ENCODE measurements at regions of chr3 and their contacts with region 1.

Region 1: GRCh38 chr3:179322286-179323196 is at the start of gene ZNF639:
- DNase-seq: peak; percentile 89
- ATAC-seq: peak; percentile 91
- total RNA-seq, gene ZNF639: 31.1 TPM

Region 2: GRCh38 chr3:178930116-178930515 is 392.4 kb before region 1 on chr3:
- intact Hi-C with region 1: no loop called
- DNase-seq: no peak
- ATAC-seq: no peak

Region 3: GRCh38 chr3:179015551-179016020 is 307.0 kb before region 1 on chr3:
- intact Hi-C with region 1: loop called (anchors 5 kb)
- DNase-seq: no peak
- ATAC-seq: peak; percentile 86

Region 4: GRCh38 chr3:179105881-179106280 is 216.7 kb before region 1 on chr3:
- intact Hi-C with region 1: loop called (anchors 2 kb)
- DNase-seq: no peak
- ATAC-seq: no peak

Region 5: DNA sequence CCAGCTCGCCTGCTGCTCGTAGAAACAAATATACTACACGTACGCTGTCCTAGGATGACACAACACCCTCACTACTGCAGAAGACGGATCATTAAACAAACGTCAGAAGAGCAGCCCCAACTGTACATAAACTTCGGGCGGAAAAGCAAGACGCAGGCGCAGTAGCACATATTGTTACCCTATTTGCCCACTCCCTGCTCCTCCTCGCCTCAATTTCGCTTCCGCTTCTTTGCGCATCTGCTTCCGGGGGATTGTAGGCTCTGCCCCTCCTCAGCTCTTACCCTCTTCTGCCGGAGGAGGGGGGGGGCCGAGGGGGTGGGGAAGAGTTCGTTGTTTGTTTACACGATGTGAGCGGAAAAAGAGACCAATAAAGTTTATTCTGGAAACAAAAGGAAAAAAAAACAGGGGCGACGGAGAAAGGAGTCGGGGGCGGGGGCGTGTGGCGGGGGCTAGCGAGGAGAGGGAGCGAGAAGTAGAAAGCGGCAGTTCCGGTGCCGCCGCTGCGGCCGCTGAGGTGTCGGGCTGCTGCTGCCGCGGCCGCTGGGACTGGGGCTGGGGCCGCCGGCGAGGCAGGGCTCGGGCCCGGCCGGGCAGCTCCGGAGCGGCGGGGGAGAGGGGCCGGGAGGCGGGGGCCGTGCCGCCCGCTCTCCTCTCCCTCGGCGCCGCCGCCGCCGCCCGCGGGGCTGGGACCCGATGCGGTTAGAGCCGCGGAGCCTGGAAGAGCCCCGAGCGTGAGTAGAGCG is 174.5 kb before region 1 on chr3 and contains the start of gene PIK3CA:
- intact Hi-C with region 1: loop called (anchors 5 kb)
- DNase-seq: peak; percentile 95
- ATAC-seq: peak; percentile 97
- total RNA-seq, gene PIK3CA: 18.1 TPM

Region 6: DNA sequence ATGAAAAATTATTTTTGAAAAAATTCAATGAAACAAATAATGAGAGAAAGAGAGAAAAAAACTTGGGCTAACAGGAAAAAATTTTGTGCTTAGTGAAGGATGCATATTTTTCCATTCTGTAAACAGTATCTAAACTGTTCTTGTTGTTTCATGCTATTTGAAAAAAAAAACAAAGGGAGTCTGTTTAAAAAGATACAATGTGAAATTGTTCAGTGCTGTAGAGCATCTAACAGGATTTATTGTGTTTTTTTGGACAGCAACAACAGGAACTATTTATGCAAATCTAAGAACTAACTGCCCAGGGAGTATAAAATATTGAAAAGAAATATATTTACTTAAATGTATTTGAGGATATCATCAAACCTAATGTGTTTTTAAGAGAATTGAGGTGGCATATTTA is 659.1 kb after region 1 on chr3:
- intact Hi-C with region 1: no loop called
- DNase-seq: no peak
- ATAC-seq: no peak

Measured in Right ventricle myocardium superior (tissue), 1 donor.